Motor neuron (in vitro differentiated cells): ENCODE measurements at regions of chr14 and their contacts with region 1.

Region 1: GRCh38 chr14:59126710-59127432 is 61.6 kb upstream of the DAAM1 start:
- ATAC-seq: peak; percentile 70 to 93 (median 84)
- H3K4me3 ChIP-seq: no peak overlapping the region
- H3K27ac ChIP-seq: no peak overlapping the region
- H3K4me1 ChIP-seq: peaks cover 0 to 5% of the 10 kb centered on the region in 2 donors

Region 2: DNA sequence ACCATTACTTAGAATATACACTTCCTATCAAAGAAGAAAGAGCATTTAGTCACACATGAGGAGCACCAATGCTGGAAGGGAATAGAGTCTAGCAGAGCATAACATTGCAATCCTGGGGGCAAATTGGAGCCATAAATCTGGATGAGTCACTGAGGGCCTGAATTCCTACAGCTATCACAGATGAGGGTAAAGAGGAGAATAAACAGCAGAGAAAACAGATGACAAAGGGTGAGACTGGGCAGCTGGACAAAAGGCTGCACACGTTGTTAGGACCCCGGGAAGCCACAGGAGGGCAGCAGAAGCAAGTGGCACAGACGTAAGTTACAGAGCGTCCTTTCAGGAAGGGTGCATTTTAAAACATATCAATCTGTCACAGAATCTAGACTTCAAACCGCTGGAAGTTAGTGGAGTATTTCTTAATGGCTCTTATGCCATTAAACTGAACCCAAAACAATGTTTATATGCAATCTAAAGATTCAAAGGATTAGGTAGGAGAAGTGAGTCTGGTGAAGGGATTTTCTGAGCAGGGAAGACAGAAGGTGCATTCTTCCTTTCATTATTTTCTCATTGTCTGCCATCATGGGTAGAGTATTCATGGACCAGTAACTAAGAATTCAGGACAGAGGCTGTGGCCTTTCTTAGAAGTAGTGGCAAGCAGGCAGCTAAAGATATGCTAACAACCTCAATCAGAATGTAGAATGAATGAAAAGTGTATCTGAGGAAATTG is 98.2 kb before region 1 on chr14:
- in situ Hi-C with region 1: loop called in 2 of 9 experiments (anchors 5 to 10 kb)
- ATAC-seq: peak; percentile 97 to 100 (median 99)
- H3K4me3 ChIP-seq: no peak overlapping the region
- H3K27ac ChIP-seq: no peak overlapping the region
- H3K4me1 ChIP-seq: peaks cover 5 to 9% of the 10 kb centered on the region in 2 donors

Region 3: DNA sequence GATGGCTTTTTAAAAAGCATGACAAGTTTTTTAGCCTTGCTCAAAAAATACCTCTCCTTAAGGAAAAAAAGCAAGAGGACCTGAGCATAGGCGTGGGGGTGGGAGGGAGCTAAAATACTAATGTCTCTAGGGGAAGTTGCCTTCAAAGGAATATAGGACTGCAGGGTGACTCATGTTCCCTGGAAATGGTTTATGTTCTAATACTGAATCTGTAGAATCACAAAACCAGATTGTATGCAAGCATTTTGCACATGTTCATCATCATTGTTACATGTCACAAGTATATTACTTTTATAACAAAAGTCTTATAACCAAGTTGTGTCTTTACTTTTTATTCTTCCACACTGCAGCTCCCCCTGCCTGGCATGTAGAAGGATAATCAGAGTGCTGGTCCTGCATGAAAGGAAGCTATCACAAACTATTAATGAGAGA is 301.7 kb after region 1 on chr14:
- in situ Hi-C with region 1: loop called in 5 of 9 experiments (anchors 10 to 25 kb)
- ATAC-seq: peak in 3 of 8 experiments; percentile 8 to 81 (median 24)
- H3K4me3 ChIP-seq: no peak overlapping the region
- H3K27ac ChIP-seq: no peak overlapping the region
- H3K4me1 ChIP-seq: peaks cover 3% of the 10 kb centered on the region in 2 donors

Region 4: DNA sequence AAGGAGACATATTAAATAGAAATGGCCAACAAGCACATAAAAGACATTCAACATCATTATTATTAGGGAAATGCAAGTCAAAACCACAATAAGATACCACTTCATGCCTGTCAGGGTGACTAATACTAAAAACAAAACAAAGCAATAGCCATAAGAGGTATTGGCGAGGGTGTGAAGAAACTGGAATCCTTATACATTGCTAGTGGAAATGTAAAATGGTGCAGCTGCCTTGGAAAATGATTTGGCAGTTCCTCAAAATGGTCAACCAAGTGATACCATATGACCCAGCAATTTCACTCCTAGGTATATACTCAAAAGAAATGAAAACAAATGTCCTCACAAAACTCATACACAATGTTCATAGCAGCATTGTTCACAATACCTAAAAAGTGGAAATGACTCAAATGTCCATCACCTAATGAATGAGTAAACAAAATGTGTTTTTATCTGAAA is 311.4 kb after region 1 on chr14:
- in situ Hi-C with region 1: loop called in 8 of 9 experiments (anchors 5 to 25 kb)
- ATAC-seq: peak in 1 of 8 experiments; percentile 64
- H3K4me3 ChIP-seq: no peak overlapping the region
- H3K27ac ChIP-seq: no peak overlapping the region
- H3K4me1 ChIP-seq: no peaks in the 10 kb centered on the region

Region 5: DNA sequence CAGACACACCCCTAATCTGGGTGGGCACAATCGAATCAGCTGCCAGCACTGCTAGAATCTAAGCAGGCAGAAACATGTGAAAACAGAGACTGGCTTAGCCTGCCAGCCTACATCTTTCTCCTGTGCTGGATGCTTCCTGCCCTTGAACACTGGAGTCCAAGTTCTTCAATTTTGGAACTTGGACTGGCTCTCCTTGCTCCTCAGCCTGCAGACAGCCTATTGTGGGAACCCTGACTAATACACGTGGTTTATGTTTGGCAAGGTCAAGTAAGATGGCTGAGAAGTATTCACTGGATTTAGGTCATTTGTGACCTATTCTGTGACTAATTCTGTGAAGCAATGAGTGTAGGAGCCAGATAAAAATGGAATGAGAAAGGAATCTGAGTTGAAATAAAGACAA is 327.3 kb after region 1 on chr14:
- in situ Hi-C with region 1: loop called in 6 of 9 experiments (anchors 10 to 25 kb)
- ATAC-seq: peak in 1 of 8 experiments; percentile 67
- H3K4me3 ChIP-seq: no peak overlapping the region
- H3K27ac ChIP-seq: no peak overlapping the region
- H3K4me1 ChIP-seq: no peaks in the 10 kb centered on the region

Region 6: GRCh38 chr14:59464486-59465315 is 337.8 kb after region 1 on chr14:
- in situ Hi-C with region 1: loop called in 1 of 9 experiments (anchors 25 kb)
- ATAC-seq: peak; percentile 74 to 90 (median 83)
- H3K4me3 ChIP-seq: peak overlapping the region; percentile 46 to 74 (median 56)
- H3K27ac ChIP-seq: peak overlapping the region; percentile 69 to 80
- H3K4me1 ChIP-seq: peaks cover 9 to 13% of the 10 kb centered on the region in 2 donors